PC-3 (cell line): ENCODE measurements at regions of chr7 and their contacts with region 1.

Region 1: GRCh38 chr7:14767716-14768425 is 134.7 kb downstream of the DGKB start:
- DNase-seq: peak; percentile 89
- ATAC-seq: peak; percentile 90
- H3K4me3 ChIP-seq: peak overlapping the region; percentile 37
- H3K27ac ChIP-seq: peak overlapping the region; percentile 93
- H3K4me1 ChIP-seq: peaks cover 54% of the 10 kb centered on the region
- H3K27me3 ChIP-seq: no peaks in the 10 kb centered on the region
- CTCF ChIP-seq: no peak

Region 2: GRCh38 chr7:14754631-14755030 is 13.2 kb before region 1 on chr7:
- CTCF ChIA-PET with region 1: no interaction called
- POLR2A ChIA-PET with region 1: no interaction called
- intact Hi-C with region 1: loop called (anchors 2 kb)
- DNase-seq: peak; percentile 81
- ATAC-seq: peak; percentile 100
- H3K4me3 ChIP-seq: no peak overlapping the region
- H3K27ac ChIP-seq: peak overlapping the region; percentile 86
- H3K4me1 ChIP-seq: peaks cover 23% of the 10 kb centered on the region
- H3K27me3 ChIP-seq: no peaks in the 10 kb centered on the region
- CTCF ChIP-seq: no peak

Region 3: DNA sequence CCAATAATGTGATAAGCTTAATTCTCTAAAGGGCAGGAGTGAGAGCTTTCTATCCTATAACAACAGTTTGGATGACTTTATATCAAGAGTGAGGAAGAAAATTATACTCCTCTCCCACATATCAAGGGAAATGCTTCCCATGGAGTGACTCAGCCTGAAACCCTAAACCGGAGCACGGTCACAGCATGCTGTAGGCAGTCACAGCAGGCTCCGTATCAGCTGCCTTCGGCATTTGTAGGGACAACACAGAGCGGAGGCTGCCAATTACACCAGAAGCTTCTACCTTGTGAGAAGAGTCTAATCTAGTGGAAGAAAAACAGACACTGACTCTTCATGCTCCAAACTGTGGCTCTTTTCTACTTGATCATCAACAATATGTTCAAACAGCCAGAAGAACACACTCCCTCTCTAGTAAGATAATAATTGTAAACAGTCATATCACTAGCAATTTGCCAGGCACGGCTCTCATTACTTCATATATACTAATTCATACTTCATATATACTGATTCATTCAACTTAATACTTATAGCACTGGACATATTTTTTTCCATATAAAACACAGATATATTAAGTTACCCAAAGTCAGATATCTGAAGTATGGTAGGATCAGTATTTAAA is 68.8 kb after region 1 on chr7:
- CTCF ChIA-PET with region 1: no interaction called
- POLR2A ChIA-PET with region 1: interaction called, 6 read pairs
- intact Hi-C with region 1: loop called (anchors 2 kb)
- DNase-seq: peak; percentile 84
- ATAC-seq: peak; percentile 95
- H3K4me3 ChIP-seq: peak overlapping the region; percentile 48; the same call in 1 of the 2 replicates
- H3K27ac ChIP-seq: peak overlapping the region; percentile 87
- H3K4me1 ChIP-seq: peaks cover 73% of the 10 kb centered on the region
- H3K27me3 ChIP-seq: no peaks in the 10 kb centered on the region
- CTCF ChIP-seq: no peak